BJ (cell line): ENCODE measurements at regions of chr19 and their contacts with region 1.

Region 1: DNA sequence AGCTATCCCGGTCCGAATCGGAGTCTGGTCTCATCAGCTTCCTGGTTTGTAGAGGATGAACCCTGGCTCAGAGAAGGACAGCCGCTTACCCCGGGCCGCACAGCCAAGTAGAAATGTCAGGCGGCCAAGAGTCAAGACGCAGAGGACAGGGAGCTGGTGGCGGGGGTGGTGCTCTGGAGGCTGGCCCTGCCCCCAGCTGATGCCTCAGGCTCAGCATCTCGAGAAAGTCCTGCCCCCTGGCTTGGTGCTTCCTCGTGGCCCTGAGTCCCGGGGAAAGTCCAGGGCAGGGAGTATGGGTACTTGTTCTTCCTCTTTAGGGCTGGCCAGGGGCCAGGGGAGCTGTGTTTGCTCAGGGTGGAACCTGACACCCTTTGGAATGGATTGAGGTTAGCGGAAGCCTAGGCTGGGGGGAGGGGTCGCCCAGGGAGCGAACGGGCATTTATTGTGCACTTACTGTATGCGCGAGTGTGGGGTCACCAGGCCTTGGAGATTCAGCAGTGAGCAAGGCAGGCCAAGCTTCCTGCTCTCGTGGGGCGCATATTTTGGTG is 2.2 kb downstream of the TJP3 start:
- DNase-seq: no peak
- H3K4me3 ChIP-seq: no peak overlapping the region
- H3K27me3 ChIP-seq: peaks cover 10% of the 10 kb centered on the region
- CTCF ChIP-seq: no peak

Region 2: DNA sequence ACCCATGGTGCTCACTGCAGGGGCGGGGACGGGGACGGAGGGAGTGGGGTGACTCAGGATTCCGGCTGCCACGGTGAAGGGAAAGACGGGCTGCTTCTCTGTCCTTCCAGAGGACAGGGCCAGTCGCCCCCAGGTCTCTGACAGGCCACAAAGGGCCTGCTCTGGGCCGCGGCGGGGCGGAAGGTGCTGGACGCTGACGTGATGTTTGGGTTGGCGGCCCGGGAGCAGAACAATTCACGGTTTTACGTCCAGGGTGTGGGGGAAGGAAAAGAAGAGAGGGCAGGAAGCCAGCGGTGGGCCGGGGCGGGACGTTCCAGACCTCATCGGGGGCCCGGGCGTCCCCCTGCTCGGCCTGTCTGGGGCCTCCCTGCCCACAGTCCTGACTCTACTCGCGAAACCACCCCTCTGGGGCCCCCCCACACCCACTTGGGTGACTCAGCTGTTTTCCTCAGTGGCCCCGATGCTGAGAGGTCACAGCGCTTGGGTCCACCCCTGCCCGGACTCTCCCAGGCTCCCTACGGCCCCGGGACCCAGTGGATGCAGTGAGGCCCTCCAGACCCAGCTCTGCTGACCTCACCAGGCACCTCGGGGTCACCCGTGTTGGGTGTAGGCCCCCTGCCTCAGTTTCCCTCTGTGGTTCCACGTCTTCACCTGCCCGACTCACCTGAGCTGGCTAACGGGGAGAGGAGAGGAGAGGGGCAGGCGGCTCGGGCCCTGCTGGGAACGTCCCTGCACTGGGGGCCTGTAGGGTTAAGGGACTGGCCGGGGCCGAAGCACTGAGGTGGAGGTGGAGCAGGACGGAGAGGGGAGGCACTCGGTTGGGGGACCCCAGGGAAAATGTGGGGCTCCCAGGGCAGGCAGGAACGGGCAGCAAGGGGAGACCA is 39.3 kb before region 1 on chr19:
- CTCF ChIA-PET with region 1: interaction called, 99 read pairs
- POLR2A ChIA-PET with region 1: interaction called, 12 read pairs
- DNase-seq: peak; percentile 36
- H3K4me3 ChIP-seq: peak overlapping the region; percentile 33
- H3K27me3 ChIP-seq: no peaks in the 10 kb centered on the region
- CTCF ChIP-seq: no peak

Region 3: GRCh38 chr19:3721131-3721886 is 11.0 kb after region 1 on chr19:
- CTCF ChIA-PET with region 1: interaction called, 21 read pairs
- POLR2A ChIA-PET with region 1: no interaction called
- DNase-seq: no peak
- H3K4me3 ChIP-seq: no peak overlapping the region
- H3K27me3 ChIP-seq: peaks cover 20% of the 10 kb centered on the region
- CTCF ChIP-seq: no peak

Region 4: DNA sequence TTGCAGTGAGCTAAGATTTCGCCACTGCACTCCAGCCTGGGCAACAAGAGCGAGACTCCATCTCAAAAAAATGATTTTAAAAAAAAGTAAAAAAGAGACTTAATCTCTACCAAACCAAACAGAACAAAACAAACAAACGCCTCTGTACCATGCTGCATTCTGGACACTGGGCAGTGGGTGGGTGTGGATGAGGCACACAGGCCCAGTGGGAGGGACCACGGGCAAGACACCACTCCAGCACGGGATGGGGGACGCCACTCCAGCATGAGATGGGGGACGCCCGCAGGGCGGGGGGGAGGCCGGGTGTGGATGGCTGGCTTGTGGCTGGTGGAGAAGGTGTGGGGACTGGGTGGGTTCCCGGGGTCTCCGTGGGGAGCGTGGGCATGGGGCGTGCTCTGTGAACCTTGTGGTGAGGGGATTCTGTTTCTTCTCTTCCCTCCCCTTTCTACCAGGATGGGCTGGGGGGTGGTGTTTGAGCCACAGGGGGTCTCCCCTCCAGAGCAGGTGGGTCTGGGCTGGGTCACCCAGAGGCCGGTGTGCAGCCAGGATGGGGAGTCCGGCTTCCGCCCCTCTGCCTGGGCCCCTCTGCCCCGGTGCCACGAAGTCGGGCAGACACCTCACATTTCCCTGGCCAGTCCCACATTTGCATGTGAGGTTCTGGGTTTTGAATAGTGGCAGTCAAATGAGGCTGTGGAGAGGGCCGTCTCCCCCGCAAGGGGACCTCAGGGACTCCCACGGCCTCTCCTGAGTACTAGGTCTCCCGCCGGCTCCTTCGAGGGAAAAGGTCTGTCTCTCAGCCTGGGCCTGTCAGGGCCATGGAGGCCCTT is 99.8 kb after region 1 on chr19:
- CTCF ChIA-PET with region 1: no interaction called
- POLR2A ChIA-PET with region 1: no interaction called
- DNase-seq: no peak
- H3K4me3 ChIP-seq: no peak overlapping the region
- H3K27me3 ChIP-seq: no peaks in the 10 kb centered on the region
- CTCF ChIP-seq: no peak

Region 5: DNA sequence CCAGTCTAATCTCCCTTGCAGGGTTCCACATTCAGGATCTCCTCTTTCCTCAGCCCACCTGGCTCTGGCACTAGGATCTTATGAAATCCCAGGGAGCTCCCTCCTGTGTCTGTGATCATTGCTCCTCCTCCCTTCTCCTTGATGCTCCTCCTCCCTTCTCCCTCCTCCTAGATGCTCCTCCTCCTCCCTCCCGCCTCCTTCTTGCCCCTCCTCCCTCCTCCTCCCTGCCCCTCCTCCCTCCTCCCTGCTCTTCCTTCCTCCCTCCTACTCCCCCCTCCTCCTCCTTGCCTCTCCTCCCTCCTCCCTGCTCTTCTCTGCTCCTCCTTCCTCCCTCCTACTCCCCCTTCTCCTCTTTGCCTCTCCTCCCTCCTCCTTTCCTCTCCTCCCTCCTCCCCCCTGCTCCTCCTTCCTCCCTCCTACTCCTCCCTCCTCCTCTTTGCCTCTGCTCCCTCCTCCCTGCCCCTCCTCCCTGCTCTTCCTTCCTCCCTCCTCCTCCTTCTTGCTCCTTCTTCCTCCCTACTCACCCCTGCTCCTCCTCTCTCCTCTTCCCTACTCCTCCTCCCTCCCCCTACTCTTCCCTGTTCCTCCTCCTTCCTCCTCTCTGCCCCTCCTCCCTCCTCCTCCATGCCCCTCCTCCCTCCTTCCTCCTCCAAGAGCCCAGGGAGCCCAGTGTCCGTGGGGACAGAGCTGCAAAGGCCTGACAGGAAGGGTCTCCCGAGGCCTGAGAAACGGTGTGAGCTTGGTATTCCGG is 371.3 kb after region 1 on chr19:
- CTCF ChIA-PET with region 1: no interaction called
- POLR2A ChIA-PET with region 1: interaction called, 22 read pairs
- DNase-seq: no peak
- H3K4me3 ChIP-seq: no peak overlapping the region
- H3K27me3 ChIP-seq: no peaks in the 10 kb centered on the region
- CTCF ChIP-seq: no peak